Naive thymus-derived CD4-positive, alpha-beta T cell (primary cell): ENCODE measurements at regions of chr9 and their contacts with region 1.

Region 1: GRCh38 chr9:93071464-93071863 is 13.0 kb downstream of the SUSD3 start:
- DNase-seq: no peak
- ATAC-seq: peak; percentile 45
- H3K4me3 ChIP-seq: no peak overlapping the region
- H3K4me3 Mint-ChIP-seq: peak overlapping the region in 6 of 10 donors; percentile 34 to 79 (median 52)
- H3K27ac ChIP-seq: peak overlapping the region; percentile 45
- H3K27ac Mint-ChIP-seq: peak overlapping the region; percentile 27 to 100 (median 84)
- H3K4me1 ChIP-seq: peaks cover 10 to 58% of the 10 kb centered on the region in 2 donors
- H3K4me1 Mint-ChIP-seq: peaks cover 42 to 95% (median 90%) of the 10 kb centered on the region in 7 donors
- H3K27me3 ChIP-seq: no peaks in the 10 kb centered on the region
- H3K27me3 Mint-ChIP-seq: no peaks in the 10 kb centered on the region

Region 2: GRCh38 chr9:93058355-93059096 is 12.9 kb before region 1 on chr9 and contains the start of gene SUSD3:
- CTCF ChIA-PET with region 1: no interaction called
- POLR2A ChIA-PET with region 1: interaction called, 74 read pairs
- intact Hi-C with region 1: no loop called
- DNase-seq: peak; percentile 47 to 82 (median 65)
- ATAC-seq: peak; percentile 81
- H3K4me3 ChIP-seq: peak within 1 kb of the TSS; percentile 90
- H3K4me3 Mint-ChIP-seq: peak within 1 kb of the TSS; percentile 93 to 97 (median 94)
- H3K27ac ChIP-seq: peak within 1 kb of the TSS; percentile 88
- H3K27ac Mint-ChIP-seq: peak within 1 kb of the TSS; percentile 97 to 100 (median 99)
- H3K4me1 ChIP-seq: peaks cover 52 to 56% of the 10 kb centered on the region in 2 donors
- H3K4me1 Mint-ChIP-seq: peaks cover 31 to 78% (median 65%) of the 10 kb centered on the region in 7 donors
- H3K27me3 ChIP-seq: no peaks in the 10 kb centered on the region
- H3K27me3 Mint-ChIP-seq: no peaks in the 10 kb centered on the region
- total RNA-seq, gene SUSD3: 62.8 to 83.5 (median 68.7) TPM